ENCODE measurements at regions of chr2 and their contacts with region 1.

Region 1: DNA sequence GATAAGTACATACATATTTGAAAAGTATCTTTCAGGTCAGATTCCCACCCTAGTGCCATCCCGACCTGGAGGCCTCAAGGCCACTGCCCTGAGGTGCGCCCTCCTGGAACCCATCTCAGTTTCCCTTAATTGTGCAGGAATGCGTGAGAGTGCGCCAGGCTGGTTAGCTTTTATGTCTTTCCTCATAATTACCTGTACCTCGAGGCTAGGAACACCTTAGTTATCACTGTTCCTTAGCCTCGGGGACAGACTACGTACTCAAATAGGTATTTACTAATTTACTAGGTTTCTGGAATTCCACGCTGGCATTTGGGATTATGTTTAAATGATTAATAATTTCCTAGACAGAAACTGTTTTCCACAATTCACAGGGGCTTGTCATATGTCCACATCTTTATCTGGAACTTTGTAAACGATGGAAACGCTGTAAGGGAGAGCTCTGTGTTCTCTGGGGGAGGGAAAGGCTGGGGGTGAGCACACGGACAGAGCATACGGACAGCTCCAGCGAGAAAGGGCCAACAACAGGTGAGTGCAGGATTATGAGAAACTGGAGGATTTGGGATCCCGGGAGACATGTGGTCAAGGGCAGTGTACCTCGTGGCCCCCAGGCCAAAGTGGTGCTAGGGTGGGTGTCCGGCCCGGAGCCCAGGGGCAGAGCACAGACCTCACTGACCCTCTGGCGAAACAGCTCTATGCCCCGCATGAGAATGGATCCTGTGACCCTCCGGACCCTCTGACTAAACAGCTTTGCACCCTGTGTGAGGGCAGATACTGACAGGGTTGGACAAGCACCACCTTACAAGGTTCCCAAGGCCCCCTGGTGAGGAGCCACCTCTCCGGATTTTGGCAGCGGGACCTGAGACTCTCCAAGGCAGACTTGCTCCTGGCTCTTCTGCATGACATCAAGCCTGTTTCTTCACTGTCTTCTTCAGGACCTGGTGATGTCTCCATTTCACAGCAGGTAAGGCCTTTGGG is 102.0 kb upstream of the PXDN start:
- DNase-seq: no peak
- H3K4me3 ChIP-seq: no peak overlapping the region
- H3K27ac ChIP-seq: no peak overlapping the region
- H3K4me1 ChIP-seq: no peaks in the 10 kb centered on the region
- H3K27me3 ChIP-seq: peaks cover 0 to 19% of the 10 kb centered on the region in 2 donors
- CTCF ChIP-seq: no peak
- POLR2A ChIP-seq: no peak

Region 2: GRCh38 chr2:460861-461260 is 1385.5 kb before region 1 on chr2:
- intact Hi-C with region 1: no loop called
- DNase-seq: peak in 1 of 2 donors; percentile 50
- H3K4me3 ChIP-seq: no peak overlapping the region
- H3K27ac ChIP-seq: no peak overlapping the region
- H3K4me1 ChIP-seq: no peaks in the 10 kb centered on the region
- H3K27me3 ChIP-seq: peaks cover 0 to 3% of the 10 kb centered on the region in 2 donors
- CTCF ChIP-seq: no peak
- POLR2A ChIP-seq: no peak

Region 3: DNA sequence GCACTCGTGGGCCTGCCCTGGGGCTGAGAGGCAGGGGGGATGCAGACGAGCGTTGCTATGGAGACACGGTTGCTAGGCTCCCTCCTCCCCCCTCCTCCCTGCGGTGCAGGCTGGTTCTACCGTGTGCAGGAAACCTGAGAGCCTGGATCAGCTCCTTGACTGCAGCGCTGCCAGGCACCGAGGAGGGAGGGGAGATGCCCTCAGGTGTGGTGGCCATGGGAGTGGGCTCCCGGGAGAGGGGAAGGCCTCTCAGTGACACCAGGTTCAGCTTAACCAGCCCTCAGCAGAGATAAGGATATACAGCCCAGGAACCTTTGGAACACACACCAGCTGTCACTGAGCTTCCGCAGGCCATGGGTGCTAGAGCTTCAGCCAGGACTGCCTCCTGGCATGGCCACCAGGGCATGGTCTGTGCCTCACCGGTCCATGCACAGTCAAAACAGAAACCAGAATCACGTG is 22.4 kb after region 1 on chr2:
- intact Hi-C with region 1: loop called (anchors 1 kb)
- DNase-seq: no peak
- H3K4me3 ChIP-seq: no peak overlapping the region
- H3K27ac ChIP-seq: no peak overlapping the region
- H3K4me1 ChIP-seq: no peaks in the 10 kb centered on the region
- H3K27me3 ChIP-seq: peaks cover 0 to 65% of the 10 kb centered on the region in 2 donors
- CTCF ChIP-seq: no peak
- POLR2A ChIP-seq: no peak

Region 4: GRCh38 chr2:3575534-3576262 is 1729.4 kb after region 1 on chr2:
- intact Hi-C with region 1: no loop called
- DNase-seq: no peak
- H3K4me3 ChIP-seq: peak overlapping the region; percentile 79 to 99 (median 83)
- H3K27ac ChIP-seq: peak overlapping the region; percentile 94 to 99
- H3K4me1 ChIP-seq: peaks cover 0 to 22% of the 10 kb centered on the region in 2 donors
- H3K27me3 ChIP-seq: no peaks in the 10 kb centered on the region
- CTCF ChIP-seq: no peak
- POLR2A ChIP-seq: no peak

Measured in breast epithelium (tissue), 4 donors.